Endothelial cell of umbilical vein (primary cell): ENCODE measurements at regions of chr20 and their contacts with region 1.

Region 1: DNA sequence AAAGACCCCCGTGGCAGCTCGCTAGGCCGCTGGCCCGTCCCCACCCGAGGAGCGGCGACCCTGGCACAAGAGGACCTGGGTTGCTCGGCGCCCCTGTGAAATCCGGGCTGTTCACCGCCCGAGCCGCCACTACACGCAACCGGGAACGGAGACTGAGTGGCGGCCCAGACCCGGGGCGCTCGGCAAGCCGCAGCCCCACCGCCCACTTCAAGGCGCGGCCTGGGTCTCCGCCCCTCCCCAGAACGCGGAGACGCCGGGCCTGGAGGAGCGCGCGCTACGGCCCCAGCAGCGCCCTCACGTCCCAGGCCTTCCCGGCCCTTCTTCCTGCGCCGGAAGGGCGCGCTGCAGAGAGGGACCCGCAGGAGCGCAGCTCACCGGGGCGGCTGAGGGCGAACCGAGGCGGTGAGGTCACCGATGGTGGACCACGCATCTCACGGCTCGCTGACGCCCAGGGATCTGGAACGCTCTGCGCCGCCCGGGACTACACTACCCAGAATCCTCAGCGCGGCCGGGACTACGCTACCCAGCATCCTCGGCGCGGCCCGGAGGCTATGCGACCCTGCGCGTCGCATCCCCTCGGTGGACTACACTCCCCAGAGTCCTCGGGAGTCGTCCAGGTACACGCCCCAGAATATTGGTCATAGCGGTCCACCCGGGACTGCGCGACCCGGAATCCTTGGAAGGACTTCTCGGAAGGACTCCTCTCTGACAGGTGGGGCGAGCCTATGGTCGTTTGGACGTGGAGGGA is at the start of gene ZNF337:
- DNase-seq: peak; percentile 96
- H3K4me3 ChIP-seq: peak within 1 kb of the TSS; percentile 83 to 89 (median 84)
- H3K27ac ChIP-seq: peak within 1 kb of the TSS; percentile 64
- H3K4me1 ChIP-seq: peaks cover 5% of the 10 kb centered on the region
- H3K27me3 ChIP-seq: no peaks in the 10 kb centered on the region
- CTCF ChIP-seq: peak in 1 of 2 donors; percentile 4
- POLR2A ChIP-seq: peak; percentile 85
- total RNA-seq, gene ZNF337: 12.9 and 16.7 TPM in 2 replicates

Region 2: DNA sequence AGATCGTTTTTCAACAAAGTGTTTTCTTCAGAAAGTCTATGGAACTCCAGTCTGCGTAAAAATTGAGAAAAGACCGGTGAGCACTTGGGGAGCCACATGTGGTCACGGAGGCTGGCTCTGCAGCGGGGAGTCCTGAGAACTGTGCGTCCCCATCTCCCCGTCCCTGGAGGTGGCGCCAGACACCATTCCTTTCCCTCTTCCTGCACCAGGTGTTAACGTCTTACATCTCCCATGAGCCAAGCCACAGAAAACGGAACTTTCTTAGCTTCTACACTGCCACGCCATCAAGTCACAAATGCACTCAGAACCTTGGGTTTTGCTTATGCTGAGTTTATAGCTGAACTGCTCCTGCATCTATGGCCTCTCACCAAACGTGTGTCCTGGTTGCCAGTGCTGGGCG is 226.5 kb before region 1 on chr20:
- CTCF ChIA-PET with region 1: no interaction called
- POLR2A ChIA-PET with region 1: no interaction called
- dilution Hi-C with region 1: no loop called
- intact Hi-C with region 1: loop called (anchors 1 kb)
- DNase-seq: peak; percentile 36
- H3K4me3 ChIP-seq: no peak overlapping the region
- H3K27ac ChIP-seq: no peak overlapping the region
- H3K4me1 ChIP-seq: no peaks in the 10 kb centered on the region
- H3K27me3 ChIP-seq: no peaks in the 10 kb centered on the region
- CTCF ChIP-seq: peak; percentile 31 to 61
- POLR2A ChIP-seq: no peak

Region 3: DNA sequence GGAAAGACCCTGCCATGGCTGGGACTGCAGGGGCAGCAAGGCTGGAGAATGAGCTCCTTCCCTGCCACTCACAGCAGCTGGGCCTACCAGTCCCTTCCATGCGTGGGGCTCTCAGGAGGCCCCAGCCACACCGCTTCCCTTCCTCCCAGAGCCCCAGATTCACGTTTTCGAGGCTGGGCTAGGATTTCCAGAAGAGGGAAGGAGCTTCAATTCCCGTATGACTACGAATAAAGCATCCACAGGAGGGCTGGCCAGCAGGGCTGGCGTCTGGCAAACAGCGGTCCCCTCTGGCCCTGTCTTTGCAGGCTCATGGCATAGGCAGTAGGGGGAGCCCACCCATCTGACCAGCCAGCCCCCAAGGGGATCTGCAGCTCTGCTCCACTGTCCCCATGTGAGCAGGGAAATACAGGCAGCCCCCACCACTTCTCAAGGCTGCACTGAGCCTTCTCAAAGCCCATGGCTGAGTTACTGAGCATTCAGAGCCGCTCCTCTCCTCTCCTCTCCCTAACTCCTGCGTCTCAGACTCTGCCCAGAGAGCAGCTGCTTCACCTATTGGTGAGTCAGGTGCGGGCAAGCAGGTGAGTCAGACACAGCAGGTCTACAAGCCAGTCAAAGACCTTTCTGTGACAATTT is 164.3 kb before region 1 on chr20:
- CTCF ChIA-PET with region 1: no interaction called
- POLR2A ChIA-PET with region 1: no interaction called
- dilution Hi-C with region 1: no loop called
- intact Hi-C with region 1: no loop called
- DNase-seq: peak; percentile 31
- H3K4me3 ChIP-seq: no peak overlapping the region
- H3K27ac ChIP-seq: no peak overlapping the region
- H3K4me1 ChIP-seq: peaks cover 11% of the 10 kb centered on the region
- H3K27me3 ChIP-seq: no peaks in the 10 kb centered on the region
- CTCF ChIP-seq: peak in 1 of 2 donors; percentile 50
- POLR2A ChIP-seq: no peak

Region 4: GRCh38 chr20:25623736-25624499 is 72.6 kb before region 1 on chr20 and contains the start of gene NANP:
- CTCF ChIA-PET with region 1: no interaction called
- POLR2A ChIA-PET with region 1: no interaction called
- dilution Hi-C with region 1: no loop called
- intact Hi-C with region 1: loop called (anchors 1 kb)
- DNase-seq: peak; percentile 99
- H3K4me3 ChIP-seq: peak within 1 kb of the TSS; percentile 55 to 85 (median 82)
- H3K27ac ChIP-seq: peak within 1 kb of the TSS; percentile 91
- H3K4me1 ChIP-seq: peaks cover 11% of the 10 kb centered on the region
- H3K27me3 ChIP-seq: no peaks in the 10 kb centered on the region
- CTCF ChIP-seq: no peak
- POLR2A ChIP-seq: peak; percentile 97
- total RNA-seq, gene NANP: 7.5 and 8.0 TPM in 2 replicates

Region 5: DNA sequence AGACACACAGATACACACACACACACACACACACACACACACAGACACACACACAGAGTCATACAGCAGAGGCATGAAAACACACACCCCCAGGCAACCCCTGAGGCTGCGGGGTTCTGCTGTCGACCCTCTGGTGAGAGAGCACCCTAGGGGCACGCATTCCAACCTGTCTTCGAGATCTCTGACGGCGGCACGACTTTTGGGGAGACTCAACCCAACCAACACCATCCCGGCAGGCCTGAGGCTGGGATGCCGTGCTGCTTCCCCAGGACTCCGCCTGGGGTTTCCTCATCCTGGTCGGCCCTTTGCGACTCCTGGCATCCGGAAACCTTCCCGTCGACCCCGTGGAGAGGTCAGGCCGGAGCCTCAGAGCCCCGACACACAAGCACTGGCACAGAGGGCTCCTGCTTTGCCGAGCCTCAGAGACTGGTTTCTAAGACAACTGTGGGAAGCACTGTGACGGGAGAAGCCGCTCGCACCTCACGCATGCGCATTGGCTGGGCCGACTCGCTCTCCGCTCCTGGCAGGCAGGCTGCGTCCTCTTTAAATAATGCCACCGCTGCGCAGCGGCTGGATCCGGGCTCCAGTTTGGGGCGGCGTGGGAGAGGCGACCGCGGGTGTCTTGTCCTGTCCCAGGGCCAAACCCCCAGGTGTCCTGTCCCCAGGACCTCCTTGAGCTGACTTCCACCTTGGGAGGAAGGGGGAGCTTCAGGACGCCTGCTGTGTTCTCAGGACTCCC is 169.0 kb after region 1 on chr20:
- CTCF ChIA-PET with region 1: no interaction called
- POLR2A ChIA-PET with region 1: no interaction called
- dilution Hi-C with region 1: no loop called
- intact Hi-C with region 1: loop called (anchors 5 kb)
- DNase-seq: peak; percentile 75
- H3K4me3 ChIP-seq: peak overlapping the region in 1 of 3 experiments; percentile 7
- H3K27ac ChIP-seq: no peak overlapping the region
- H3K4me1 ChIP-seq: peaks cover 6% of the 10 kb centered on the region
- H3K27me3 ChIP-seq: peaks cover 16 to 28% of the 10 kb centered on the region in 2 experiments
- CTCF ChIP-seq: no peak
- POLR2A ChIP-seq: no peak